ENCODE measurements at regions of chr12 and their contacts with region 1.

Region 1: DNA sequence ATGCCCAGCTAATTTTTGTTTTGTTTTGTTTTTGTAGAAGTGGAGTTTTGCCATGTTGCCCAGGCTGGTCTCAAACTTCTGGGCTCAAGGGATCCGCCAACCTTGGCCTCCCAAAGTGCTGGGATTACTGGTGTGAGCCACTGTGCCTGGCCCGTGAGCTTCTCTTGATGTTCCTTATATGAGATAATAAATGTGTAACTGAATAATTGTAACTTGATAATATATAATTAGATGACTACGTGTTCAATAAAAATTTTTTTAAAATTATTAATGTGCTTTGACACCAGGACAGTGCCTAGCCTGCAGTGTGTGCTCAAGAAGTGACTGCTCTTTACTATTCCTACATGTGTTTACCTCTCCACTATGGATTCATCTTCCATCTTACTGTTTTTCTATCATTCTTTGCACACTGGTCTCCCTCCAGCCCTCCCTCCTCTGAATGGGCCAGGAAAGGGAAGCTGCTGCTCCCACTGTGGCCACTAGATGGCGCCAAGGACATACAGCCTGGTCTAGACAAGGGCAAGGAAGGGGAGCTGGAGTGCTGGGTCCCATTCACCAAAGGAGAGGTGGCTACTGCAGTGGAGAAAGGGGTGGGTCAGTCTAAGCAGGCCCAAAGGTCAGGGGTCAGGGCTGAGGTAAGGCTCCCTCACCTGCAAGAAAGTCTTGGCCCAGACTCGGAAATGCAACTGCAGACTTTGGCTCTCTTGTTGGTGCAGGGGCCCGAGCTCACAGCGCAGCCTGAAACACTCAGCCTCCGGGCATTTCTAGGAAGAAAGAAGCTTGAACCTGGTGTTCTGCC is 14.7 kb upstream of the ZNF385A start:
- DNase-seq: no peak
- H3K4me3 ChIP-seq: no peak overlapping the region
- H3K27me3 ChIP-seq: no peaks in the 10 kb centered on the region
- CTCF ChIP-seq: peak; percentile 100

Region 2: GRCh38 chr12:54324617-54325441 is 74.4 kb before region 1 on chr12 and contains the start of gene COPZ1:
- CTCF ChIA-PET with region 1: no interaction called
- POLR2A ChIA-PET with region 1: no interaction called
- DNase-seq: peak; percentile 100
- H3K4me3 ChIP-seq: peak within 1 kb of the TSS; percentile 65
- H3K27me3 ChIP-seq: no peaks in the 10 kb centered on the region
- CTCF ChIP-seq: peak; percentile 82
- polyA plus RNA-seq, gene COPZ1: 203 and 341 TPM in 2 replicates

Region 3: DNA sequence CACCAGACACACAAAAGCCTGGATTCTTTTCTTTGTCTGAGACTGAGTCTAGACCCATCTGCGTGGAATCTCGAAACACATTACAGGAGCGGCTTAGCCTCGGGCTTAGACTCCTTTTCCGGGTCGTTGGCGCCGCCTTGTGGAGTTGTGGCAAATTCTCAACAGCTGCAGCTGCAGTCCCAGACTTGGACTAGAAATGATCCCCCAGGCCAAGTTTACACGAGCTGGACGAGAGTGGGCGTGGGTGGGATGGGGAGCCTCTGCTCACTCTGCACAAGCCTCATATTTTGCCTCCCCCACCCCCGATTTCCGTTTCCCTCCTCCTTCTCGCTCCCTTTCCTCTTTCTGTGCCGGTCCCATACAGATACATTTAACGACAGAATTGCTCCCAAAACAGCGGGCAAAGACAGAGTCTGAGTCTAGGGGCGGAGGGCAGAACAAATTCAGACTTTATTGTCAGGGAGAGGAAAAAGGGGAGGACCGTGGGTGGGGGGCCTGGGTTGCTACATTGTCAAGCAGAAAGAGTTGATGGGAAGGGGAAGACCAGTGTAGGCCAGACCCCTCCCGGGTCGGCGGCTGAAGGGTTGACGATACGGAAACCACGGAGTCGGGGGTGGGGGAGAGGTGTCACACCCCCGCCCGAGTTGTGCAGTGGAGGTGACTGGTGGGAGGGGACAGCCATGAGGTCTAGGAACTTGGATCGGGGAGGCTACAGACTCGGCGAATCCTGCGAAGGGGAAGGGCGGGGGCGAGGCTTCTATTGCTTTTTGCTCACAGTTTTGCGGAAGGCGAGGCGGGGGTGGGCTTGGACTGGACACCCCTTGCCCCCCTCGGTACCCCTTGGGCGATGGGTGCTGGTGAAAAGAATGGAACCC is 30.2 kb before region 1 on chr12:
- CTCF ChIA-PET with region 1: interaction called, 11 read pairs
- POLR2A ChIA-PET with region 1: no interaction called
- DNase-seq: peak; percentile 39
- H3K4me3 ChIP-seq: no peak overlapping the region
- H3K27me3 ChIP-seq: no peaks in the 10 kb centered on the region
- CTCF ChIP-seq: peak; percentile 93

Region 4: DNA sequence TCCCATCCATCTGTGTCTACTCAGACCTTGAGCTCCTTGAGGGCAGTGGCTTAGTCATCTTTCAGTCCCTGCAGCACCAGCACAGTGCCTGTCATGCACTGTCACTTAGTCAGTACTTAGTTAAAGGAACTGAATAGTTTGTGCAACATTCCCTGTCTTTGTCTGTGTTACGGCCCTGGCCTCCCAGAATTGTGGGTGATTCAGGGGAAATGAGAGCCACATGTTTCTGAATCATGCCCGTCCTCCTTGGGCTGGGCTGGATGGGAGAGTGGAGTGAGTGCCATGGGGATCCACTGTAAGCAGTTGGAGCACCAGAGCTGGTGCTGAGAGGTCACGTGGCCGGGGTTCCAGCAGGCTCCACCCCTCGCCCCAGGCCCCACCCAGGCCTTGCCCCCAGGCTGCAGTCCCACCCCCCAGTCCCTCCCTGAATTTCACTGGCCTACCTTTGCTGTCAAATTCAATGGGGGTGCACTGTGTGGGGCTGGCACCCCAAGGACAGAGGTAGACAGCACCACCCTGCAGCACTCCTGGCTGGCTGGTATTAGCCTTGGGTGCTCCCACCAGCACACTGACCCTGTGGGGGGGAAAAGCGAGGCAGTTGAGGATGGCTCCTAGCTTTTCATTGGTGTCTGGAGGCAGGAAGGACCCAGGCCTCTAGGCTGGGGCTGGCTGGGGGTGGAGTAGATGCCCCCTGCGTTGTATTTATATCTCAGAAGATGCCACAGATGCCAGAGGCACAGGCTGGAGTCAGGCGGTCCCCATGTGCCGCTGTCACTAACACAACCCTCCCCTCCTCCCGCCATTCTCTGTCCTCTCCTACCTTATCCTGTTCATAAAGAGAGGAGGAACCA is 12.4 kb after region 1 on chr12:
- CTCF ChIA-PET with region 1: interaction called, 209 read pairs
- POLR2A ChIA-PET with region 1: no interaction called
- DNase-seq: peak; percentile 98
- H3K4me3 ChIP-seq: no peak overlapping the region
- H3K27me3 ChIP-seq: no peaks in the 10 kb centered on the region
- CTCF ChIP-seq: no peak

Region 5: DNA sequence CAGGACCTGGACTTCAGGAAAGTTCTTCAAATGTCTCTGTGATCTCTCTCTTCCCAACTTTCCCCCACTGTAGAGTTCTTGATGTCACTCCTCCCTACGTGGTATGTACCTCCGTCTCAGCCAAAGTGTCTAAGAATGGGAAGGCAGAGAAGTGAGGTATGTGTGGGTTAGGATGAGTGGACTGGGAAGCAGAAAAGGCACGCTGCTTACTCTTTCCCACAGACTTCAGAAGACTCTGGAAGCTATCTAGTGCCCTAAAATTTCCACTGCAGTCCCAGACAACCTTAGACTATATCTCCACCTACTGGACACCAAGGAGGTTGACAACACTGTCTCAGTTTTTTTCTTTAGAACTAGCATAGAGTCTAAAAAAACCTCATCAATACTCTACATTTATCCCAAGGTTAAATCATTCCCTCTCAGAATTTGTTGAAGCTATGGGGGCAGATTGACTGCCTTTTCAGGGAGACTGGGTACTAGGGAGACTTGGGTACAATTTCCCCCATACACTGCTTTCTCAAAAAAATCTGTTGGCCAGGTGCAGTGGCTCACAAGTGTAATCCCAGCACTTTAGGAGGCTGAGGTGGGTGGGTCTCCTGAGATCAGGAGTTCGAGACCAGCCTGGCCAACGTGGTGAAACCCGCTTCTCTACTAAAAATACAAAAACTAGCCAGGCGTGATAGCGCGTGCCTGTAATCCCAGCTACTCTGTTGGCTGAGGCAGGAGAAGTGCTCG is 40.5 kb after region 1 on chr12:
- CTCF ChIA-PET with region 1: interaction called, 643 read pairs
- POLR2A ChIA-PET with region 1: interaction called, 3 read pairs
- DNase-seq: peak; percentile 27
- H3K4me3 ChIP-seq: no peak overlapping the region
- H3K27me3 ChIP-seq: peaks cover 4% of the 10 kb centered on the region; the same call in 1 of the 2 replicates
- CTCF ChIP-seq: peak; percentile 79

Region 6: GRCh38 chr12:54463034-54463433 is 63.8 kb after region 1 on chr12:
- CTCF ChIA-PET with region 1: interaction called, 16 read pairs
- POLR2A ChIA-PET with region 1: no interaction called
- DNase-seq: peak; percentile 44
- H3K4me3 ChIP-seq: no peak overlapping the region
- H3K27me3 ChIP-seq: peaks cover 16% of the 10 kb centered on the region
- CTCF ChIP-seq: no peak